Activated naive CD4-positive, alpha-beta T cell treated with anti-CD3 and anti-CD28 coated beads for 36 hours (primary cell): ENCODE measurements at regions of chr6 and their contacts with region 1.

Region 1: GRCh38 chr6:134047673-134048072 is 4.8 kb downstream of the SLC2A12 start:
- DNase-seq: no peak
- H3K4me3 Mint-ChIP-seq: no peak overlapping the region
- H3K27ac Mint-ChIP-seq: no peak overlapping the region
- H3K4me1 Mint-ChIP-seq: peaks cover 8% of the 10 kb centered on the region
- H3K27me3 Mint-ChIP-seq: peaks cover 2% of the 10 kb centered on the region

Region 2: DNA sequence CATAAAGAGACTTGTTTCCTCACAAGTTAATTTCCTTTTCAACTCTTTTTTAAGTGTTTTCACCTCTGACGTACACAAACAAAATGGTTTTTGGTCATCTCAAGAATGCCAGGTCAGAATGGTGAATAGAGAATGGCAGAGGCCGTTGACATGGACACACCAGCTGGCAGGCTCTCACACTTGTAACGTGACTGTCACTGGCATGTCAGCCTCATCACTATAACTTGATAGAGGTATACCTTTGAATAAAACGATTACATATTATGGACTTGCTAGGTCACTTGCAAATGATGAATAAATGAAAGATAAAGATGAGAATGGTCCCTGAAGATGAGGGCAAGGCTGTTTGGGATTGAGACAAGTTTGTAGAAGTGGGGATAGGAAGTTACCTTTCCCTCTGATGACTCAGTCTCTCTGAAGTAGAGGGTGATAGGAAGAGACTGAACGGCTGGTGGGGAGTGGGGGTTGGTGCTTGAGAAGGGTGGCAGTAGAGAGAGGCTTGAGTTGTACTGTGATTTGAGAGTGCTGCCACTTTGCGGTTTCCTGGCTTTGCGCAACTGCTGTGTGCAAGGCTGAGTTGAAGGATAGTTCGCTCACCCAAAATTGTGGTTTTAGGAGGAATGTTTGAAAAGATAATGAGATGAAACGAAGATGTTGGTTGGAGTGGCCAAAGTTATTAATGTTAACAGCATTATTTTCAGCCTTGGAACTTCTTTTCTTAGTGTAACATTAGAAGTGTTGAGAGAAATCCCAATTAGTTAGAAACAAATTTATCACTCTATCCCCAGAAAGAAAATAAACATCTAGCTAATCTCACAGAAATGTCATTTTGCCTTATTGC is 64.4 kb before region 1 on chr6:
- CTCF ChIA-PET with region 1: interaction called, 4 read pairs
- intact Hi-C with region 1: loop called (anchors 2 kb)
- DNase-seq: peak; percentile 83
- H3K4me3 Mint-ChIP-seq: no peak overlapping the region
- H3K27ac Mint-ChIP-seq: no peak overlapping the region
- H3K4me1 Mint-ChIP-seq: peaks cover 28% of the 10 kb centered on the region
- H3K27me3 Mint-ChIP-seq: no peaks in the 10 kb centered on the region